CD8-positive, alpha-beta memory T cell (primary cell): ENCODE measurements at regions of chr18 and their contacts with region 1.

Region 1: GRCh38 chr18:48445540-48445939 is 36.4 kb upstream of the ZBTB7C start:
- DNase-seq: peak; percentile 30 to 67 (median 31)
- H3K4me3 ChIP-seq: no peak overlapping the region
- H3K4me3 Mint-ChIP-seq: no peak overlapping the region
- H3K27ac ChIP-seq: no peak overlapping the region
- H3K27ac Mint-ChIP-seq: no peak overlapping the region
- H3K4me1 ChIP-seq: no peaks in the 10 kb centered on the region
- H3K4me1 Mint-ChIP-seq: peaks cover 5 to 10% (median 10%) of the 10 kb centered on the region in 3 donors
- H3K27me3 ChIP-seq: no peaks in the 10 kb centered on the region
- H3K27me3 Mint-ChIP-seq: peaks cover 14 to 42% of the 10 kb centered on the region in 2 donors

Region 2: GRCh38 chr18:48345596-48345995 is 99.9 kb before region 1 on chr18:
- CTCF ChIA-PET with region 1: no interaction called
- POLR2A ChIA-PET with region 1: no interaction called
- DNase-seq: no peak
- H3K4me3 ChIP-seq: no peak overlapping the region
- H3K4me3 Mint-ChIP-seq: no peak overlapping the region
- H3K27ac ChIP-seq: no peak overlapping the region
- H3K27ac Mint-ChIP-seq: no peak overlapping the region
- H3K4me1 ChIP-seq: no peaks in the 10 kb centered on the region
- H3K4me1 Mint-ChIP-seq: no peaks in the 10 kb centered on the region
- H3K27me3 ChIP-seq: no peaks in the 10 kb centered on the region
- H3K27me3 Mint-ChIP-seq: peaks cover 4 to 6% of the 10 kb centered on the region in 2 donors

Region 3: DNA sequence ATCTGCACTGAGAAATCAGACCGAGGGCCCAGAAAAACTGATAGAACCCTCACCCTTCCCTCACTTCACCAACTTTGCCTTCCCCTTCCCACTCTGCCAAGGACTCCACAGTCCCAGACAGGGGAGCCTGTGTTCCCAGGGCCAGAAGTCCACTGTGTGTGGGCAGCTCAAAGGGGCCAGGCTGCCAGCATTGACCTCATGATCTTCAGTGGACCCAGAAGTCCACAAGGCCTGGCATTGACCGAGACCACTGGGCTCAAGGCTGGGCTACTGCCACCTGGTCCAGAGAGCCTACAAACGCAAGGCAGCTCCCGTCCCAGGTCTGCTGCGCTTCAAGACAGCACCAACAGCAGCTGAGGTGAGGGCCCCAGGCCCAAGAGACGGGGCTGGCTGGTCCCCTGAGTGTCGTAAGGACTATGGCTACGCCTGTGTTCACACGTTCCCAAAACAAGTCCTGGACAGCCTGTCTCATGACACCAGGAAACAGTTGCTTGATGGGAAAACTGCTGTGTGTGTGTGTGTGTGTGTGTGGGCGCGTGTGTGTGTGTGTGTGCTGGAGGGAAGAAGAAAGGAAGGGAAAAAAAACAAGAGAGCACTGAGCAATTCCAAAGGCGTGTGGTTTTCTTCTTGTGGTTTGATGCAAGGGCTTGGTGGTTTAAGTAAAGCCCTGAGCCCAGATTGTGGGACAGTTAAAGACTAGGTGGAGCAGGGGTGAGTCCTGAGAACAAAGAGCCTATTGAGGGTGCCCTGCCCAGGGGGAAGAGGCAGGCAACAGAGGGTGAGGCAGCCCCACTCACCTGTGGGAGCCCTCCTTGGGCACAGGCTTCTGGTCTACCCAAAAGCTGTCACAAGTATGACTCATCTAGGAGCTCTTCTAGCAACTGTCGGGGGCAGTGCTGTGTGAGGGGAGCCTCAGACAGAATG is 10.3 kb after region 1 on chr18:
- CTCF ChIA-PET with region 1: interaction called, 12 read pairs
- POLR2A ChIA-PET with region 1: no interaction called
- DNase-seq: peak in 4 of 5 donors; percentile 12 to 59 (median 36)
- H3K4me3 ChIP-seq: no peak overlapping the region
- H3K4me3 Mint-ChIP-seq: peak overlapping the region in 1 of 7 donors; percentile 5
- H3K27ac ChIP-seq: no peak overlapping the region
- H3K27ac Mint-ChIP-seq: peak overlapping the region in 2 of 8 donors; percentile 1 to 37
- H3K4me1 ChIP-seq: peaks cover 30% of the 10 kb centered on the region
- H3K4me1 Mint-ChIP-seq: peaks cover 13 to 27% (median 20%) of the 10 kb centered on the region in 3 donors
- H3K27me3 ChIP-seq: peaks cover 18% of the 10 kb centered on the region
- H3K27me3 Mint-ChIP-seq: peaks cover 23 to 46% of the 10 kb centered on the region in 2 donors

Region 4: DNA sequence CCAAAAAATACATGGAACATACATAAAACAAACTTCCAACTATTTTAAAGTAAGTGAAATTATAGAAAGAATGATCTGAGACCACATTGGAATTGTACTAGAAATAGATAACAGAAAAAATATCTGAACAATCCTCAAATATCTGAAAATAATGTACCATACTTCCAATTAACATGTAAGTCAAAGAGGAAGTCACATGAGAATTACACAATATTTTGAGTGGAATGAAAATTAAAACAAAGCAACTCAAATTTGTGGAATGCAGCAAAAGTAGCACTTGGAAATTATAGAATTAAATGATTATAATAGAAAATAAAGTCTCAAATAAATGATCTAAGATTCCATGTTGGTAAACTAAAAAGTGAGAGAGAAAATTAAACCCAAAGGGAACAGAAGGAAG is 55.0 kb after region 1 on chr18:
- CTCF ChIA-PET with region 1: no interaction called
- POLR2A ChIA-PET with region 1: no interaction called
- DNase-seq: no peak
- H3K4me3 ChIP-seq: no peak overlapping the region
- H3K4me3 Mint-ChIP-seq: no peak overlapping the region
- H3K27ac ChIP-seq: no peak overlapping the region
- H3K27ac Mint-ChIP-seq: no peak overlapping the region
- H3K4me1 ChIP-seq: no peaks in the 10 kb centered on the region
- H3K4me1 Mint-ChIP-seq: no peaks in the 10 kb centered on the region
- H3K27me3 ChIP-seq: peaks cover 3% of the 10 kb centered on the region
- H3K27me3 Mint-ChIP-seq: peaks cover 8 to 44% of the 10 kb centered on the region in 2 donors